Activated B cell treated with CpG ODN at 0.5 μM for 24 hours (primary cell): ENCODE measurements at regions of chr17 and their contacts with region 1.

Region 1: DNA sequence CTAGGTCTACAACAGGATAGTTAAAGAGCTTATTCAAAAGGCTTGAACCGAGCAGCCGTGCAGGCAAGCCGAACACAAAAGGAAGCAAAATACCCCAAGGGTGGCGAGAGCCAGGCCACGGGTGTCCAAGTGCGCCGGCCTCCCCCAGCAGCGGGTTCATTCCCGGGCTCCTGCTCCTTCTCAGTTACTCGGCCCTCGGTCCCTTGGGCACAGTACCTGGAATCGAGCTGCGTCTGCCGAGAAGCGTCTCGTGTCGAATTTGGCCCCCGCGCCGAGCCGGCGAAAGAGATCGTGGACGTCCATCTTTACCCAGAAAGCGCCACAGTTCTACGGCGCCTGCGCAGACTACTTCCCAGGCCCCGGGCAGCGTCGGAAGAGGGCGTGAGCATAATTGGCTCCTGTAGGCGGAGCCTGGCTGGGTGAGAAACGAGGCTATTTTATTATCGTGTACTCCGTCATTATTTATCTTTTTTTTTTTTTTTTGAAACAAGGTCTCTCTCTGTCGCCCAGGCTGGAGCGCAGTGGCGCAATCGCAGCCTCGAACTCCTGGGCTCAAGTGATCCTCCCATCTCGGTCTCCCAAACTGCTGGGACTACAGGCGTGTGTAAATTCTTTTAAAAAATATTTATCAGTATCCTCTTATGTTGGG is at the start of gene DDX52:
- DNase-seq: peak; percentile 78
- ATAC-seq: peak; percentile 99
- H3K4me3 Mint-ChIP-seq: peak within 1 kb of the TSS; percentile 95
- H3K27ac Mint-ChIP-seq: peak within 1 kb of the TSS; percentile 90
- H3K4me1 Mint-ChIP-seq: peaks cover 38% of the 10 kb centered on the region
- H3K27me3 Mint-ChIP-seq: peaks cover 9% of the 10 kb centered on the region
- CTCF ChIP-seq: no peak
- total RNA-seq, gene DDX52: 35.6 and 39.9 TPM in 2 replicates

Region 2: GRCh38 chr17:37737081-37737480 is 93.8 kb after region 1 on chr17:
- CTCF ChIA-PET with region 1: no interaction called
- POLR2A ChIA-PET with region 1: no interaction called
- intact Hi-C with region 1: loop called (anchors 5 kb)
- DNase-seq: no peak
- ATAC-seq: no peak
- H3K4me3 Mint-ChIP-seq: no peak overlapping the region
- H3K27ac Mint-ChIP-seq: no peak overlapping the region
- H3K4me1 Mint-ChIP-seq: peaks cover 10% of the 10 kb centered on the region
- H3K27me3 Mint-ChIP-seq: peaks cover 37% of the 10 kb centered on the region
- CTCF ChIP-seq: no peak